Naive thymus-derived CD4-positive, alpha-beta T cell (primary cell): ENCODE measurements at regions of chr20 and their contacts with region 1.

Region 1: GRCh38 chr20:36591854-36592641 is 13.5 kb upstream of the RAB5IF start:
- DNase-seq: peak in 6 of 9 donors; percentile 23 to 61 (median 42)
- ATAC-seq: peak; percentile 40
- H3K4me3 ChIP-seq: no peak overlapping the region
- H3K4me3 Mint-ChIP-seq: peak overlapping the region in 7 of 10 donors; percentile 22 to 60 (median 42)
- H3K27ac ChIP-seq: peak overlapping the region; percentile 56
- H3K27ac Mint-ChIP-seq: peak overlapping the region; percentile 42 to 90 (median 88)
- H3K4me1 ChIP-seq: peaks cover 14 to 16% of the 10 kb centered on the region in 2 donors
- H3K4me1 Mint-ChIP-seq: peaks cover 33 to 61% (median 48%) of the 10 kb centered on the region in 7 donors
- H3K27me3 ChIP-seq: no peaks in the 10 kb centered on the region
- H3K27me3 Mint-ChIP-seq: no peaks in the 10 kb centered on the region

Region 2: DNA sequence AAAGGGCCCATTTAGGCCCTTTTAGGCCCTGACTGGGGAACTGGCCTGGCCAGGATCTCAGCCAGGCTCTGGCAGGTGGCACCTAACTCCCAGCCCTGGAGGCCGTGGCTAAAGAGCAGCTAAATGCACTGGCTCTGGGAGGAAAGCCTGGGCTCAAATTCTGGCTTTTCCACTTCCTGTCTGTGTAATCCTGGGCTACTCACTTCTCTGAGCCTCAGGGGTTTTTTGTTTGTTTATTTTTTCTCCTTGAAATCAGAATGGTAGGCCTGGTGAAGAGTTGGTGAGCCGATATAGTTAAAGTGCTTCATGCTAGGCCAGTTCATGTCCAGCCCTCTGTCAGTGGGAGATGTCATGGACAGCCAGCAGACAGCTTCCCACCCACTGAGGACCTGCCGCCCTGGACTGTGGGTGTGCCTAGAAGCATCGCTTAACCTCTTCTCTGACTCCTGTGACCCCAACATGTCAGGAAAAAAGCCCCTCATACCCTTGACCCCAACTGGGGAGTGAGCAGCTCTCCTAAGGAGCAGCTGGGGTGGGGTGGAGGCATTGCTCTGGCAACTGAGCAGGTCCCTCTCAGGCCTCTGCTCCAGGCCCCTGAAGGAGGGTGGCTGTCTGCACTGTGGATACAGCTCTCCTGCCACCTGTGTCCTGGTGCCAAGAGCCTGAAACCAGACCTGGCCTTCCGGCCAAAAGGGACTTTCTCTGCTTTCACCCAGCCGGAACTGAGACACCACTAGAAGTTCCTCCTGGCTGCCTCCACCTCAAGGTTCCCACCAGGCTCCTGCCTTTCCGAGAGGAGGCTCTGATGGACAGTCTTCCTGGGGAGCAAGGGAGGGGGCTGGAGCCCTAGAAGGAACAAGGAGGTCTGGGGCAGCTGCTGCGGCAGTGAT is 107.9 kb before region 1 on chr20:
- CTCF ChIA-PET with region 1: no interaction called
- POLR2A ChIA-PET with region 1: no interaction called
- intact Hi-C with region 1: no loop called
- DNase-seq: no peak
- ATAC-seq: no peak
- H3K4me3 ChIP-seq: no peak overlapping the region
- H3K4me3 Mint-ChIP-seq: no peak overlapping the region
- H3K27ac ChIP-seq: no peak overlapping the region
- H3K27ac Mint-ChIP-seq: no peak overlapping the region
- H3K4me1 ChIP-seq: peaks cover 4% of the 10 kb centered on the region in 2 donors
- H3K4me1 Mint-ChIP-seq: peaks cover 20 to 55% (median 34%) of the 10 kb centered on the region in 7 donors
- H3K27me3 ChIP-seq: no peaks in the 10 kb centered on the region
- H3K27me3 Mint-ChIP-seq: no peaks in the 10 kb centered on the region

Region 3: GRCh38 chr20:36506253-36506652 is 85.8 kb before region 1 on chr20:
- CTCF ChIA-PET with region 1: no interaction called
- POLR2A ChIA-PET with region 1: no interaction called
- intact Hi-C with region 1: loop called in 1 of 2 experiments (anchors 5 kb)
- DNase-seq: peak in 7 of 9 donors; percentile 18 to 49 (median 42)
- ATAC-seq: peak; percentile 77
- H3K4me3 ChIP-seq: no peak overlapping the region
- H3K4me3 Mint-ChIP-seq: no peak overlapping the region
- H3K27ac ChIP-seq: no peak overlapping the region
- H3K27ac Mint-ChIP-seq: peak overlapping the region in 5 of 9 donors; percentile 17 to 72 (median 27)
- H3K4me1 ChIP-seq: no peaks in the 10 kb centered on the region
- H3K4me1 Mint-ChIP-seq: peaks cover 0 to 19% (median 14%) of the 10 kb centered on the region in 7 donors
- H3K27me3 ChIP-seq: no peaks in the 10 kb centered on the region
- H3K27me3 Mint-ChIP-seq: no peaks in the 10 kb centered on the region

Region 4: DNA sequence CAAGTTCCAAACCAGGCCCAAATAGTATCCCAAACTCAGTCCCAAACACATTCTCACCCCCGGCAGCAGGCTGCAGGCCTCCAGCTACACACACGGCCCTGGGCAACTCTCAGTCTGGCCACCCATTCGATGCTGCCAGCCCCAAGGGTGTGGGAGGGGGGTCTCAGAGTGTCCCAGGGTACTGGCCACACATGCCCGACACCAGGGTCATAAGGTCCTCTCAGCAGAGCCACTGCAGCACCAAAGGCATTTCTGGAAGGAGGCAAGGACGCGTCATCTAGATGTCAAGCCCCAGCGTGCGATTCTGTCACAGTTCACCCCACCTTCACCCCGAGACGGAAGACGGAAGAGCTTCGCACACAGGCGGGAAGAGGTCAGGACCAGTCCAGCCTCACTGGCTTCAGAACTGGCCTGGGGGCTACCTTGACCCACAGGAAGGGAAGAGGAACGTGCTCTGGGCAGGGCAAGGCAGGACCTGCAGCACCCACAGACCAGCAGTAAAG is 41.2 kb before region 1 on chr20:
- CTCF ChIA-PET with region 1: no interaction called
- POLR2A ChIA-PET with region 1: no interaction called
- intact Hi-C with region 1: loop called in 1 of 2 experiments (anchors 1 kb)
- DNase-seq: no peak
- ATAC-seq: no peak
- H3K4me3 ChIP-seq: no peak overlapping the region
- H3K4me3 Mint-ChIP-seq: no peak overlapping the region
- H3K27ac ChIP-seq: no peak overlapping the region
- H3K27ac Mint-ChIP-seq: peak overlapping the region in 1 of 9 donors; percentile 60
- H3K4me1 ChIP-seq: no peaks in the 10 kb centered on the region
- H3K4me1 Mint-ChIP-seq: peaks cover 0 to 5% (median 2%) of the 10 kb centered on the region in 7 donors
- H3K27me3 ChIP-seq: no peaks in the 10 kb centered on the region
- H3K27me3 Mint-ChIP-seq: no peaks in the 10 kb centered on the region

Region 5: DNA sequence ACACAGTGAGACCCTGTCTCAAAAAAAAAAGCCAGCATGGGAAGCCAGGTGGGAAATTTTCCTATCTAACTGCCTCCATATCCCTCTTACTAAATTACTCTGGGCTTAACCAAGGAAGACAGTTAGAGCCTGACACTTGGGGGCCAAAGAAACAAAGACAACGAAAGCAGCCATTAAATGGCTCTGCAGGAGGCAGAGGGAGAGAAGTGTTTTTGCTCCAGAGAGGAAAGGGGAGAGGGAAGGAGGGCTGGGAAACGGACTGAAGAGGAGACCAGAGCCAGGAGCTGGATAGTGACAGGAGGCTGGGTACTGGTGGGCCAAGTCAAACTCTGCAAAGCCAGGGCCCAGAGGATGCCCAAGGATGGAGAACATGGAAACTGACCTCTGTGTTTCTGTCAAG is 29.3 kb before region 1 on chr20:
- CTCF ChIA-PET with region 1: interaction called, 16 read pairs
- POLR2A ChIA-PET with region 1: no interaction called
- intact Hi-C with region 1: no loop called
- DNase-seq: no peak
- ATAC-seq: no peak
- H3K4me3 ChIP-seq: no peak overlapping the region
- H3K4me3 Mint-ChIP-seq: no peak overlapping the region
- H3K27ac ChIP-seq: no peak overlapping the region
- H3K27ac Mint-ChIP-seq: peak overlapping the region in 1 of 9 donors; percentile 21
- H3K4me1 ChIP-seq: peaks cover 0 to 10% of the 10 kb centered on the region in 2 donors
- H3K4me1 Mint-ChIP-seq: peaks cover 0 to 5% (median 0%) of the 10 kb centered on the region in 7 donors
- H3K27me3 ChIP-seq: no peaks in the 10 kb centered on the region
- H3K27me3 Mint-ChIP-seq: no peaks in the 10 kb centered on the region

Region 6: DNA sequence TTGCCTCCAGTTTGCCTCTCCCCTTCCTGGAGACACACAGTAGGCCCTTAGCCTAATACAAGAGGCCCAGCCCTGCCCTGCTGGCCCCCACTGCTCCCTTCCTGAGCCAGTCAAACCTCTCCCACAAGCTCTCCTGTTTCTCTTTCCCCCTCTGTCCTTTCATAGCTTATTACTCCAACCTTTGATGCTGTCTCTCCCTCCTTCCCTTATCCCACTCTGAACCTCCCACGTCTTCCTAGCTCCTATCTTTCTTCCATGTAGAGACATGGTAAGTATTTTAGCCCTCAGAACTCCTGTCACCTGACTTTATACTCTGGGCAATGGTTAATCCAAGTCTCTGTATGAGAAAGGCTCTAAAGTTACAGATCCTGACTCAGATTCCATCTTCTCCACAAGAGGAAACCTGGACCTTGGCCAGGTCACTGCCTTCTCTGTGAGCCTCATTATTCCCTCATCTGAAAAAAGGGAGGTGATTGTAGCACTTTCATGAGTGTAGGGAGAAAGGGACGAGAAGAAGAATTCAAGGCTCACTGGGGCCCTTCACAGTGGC is 12.0 kb before region 1 on chr20:
- CTCF ChIA-PET with region 1: interaction called, 10 read pairs
- POLR2A ChIA-PET with region 1: interaction called, 123 read pairs
- intact Hi-C with region 1: no loop called
- DNase-seq: no peak
- ATAC-seq: no peak
- H3K4me3 ChIP-seq: no peak overlapping the region
- H3K4me3 Mint-ChIP-seq: peak overlapping the region in 2 of 10 donors; percentile 23 to 42
- H3K27ac ChIP-seq: no peak overlapping the region
- H3K27ac Mint-ChIP-seq: peak overlapping the region in 8 of 9 donors; percentile 20 to 86 (median 72)
- H3K4me1 ChIP-seq: peaks cover 5 to 24% of the 10 kb centered on the region in 2 donors
- H3K4me1 Mint-ChIP-seq: peaks cover 19 to 44% (median 33%) of the 10 kb centered on the region in 7 donors
- H3K27me3 ChIP-seq: no peaks in the 10 kb centered on the region
- H3K27me3 Mint-ChIP-seq: no peaks in the 10 kb centered on the region

Region 7: GRCh38 chr20:38369389-38369788 is 1777.3 kb after region 1 on chr20:
- CTCF ChIA-PET with region 1: no interaction called
- POLR2A ChIA-PET with region 1: no interaction called
- intact Hi-C with region 1: no loop called
- DNase-seq: no peak
- ATAC-seq: peak; percentile 53
- H3K4me3 ChIP-seq: no peak overlapping the region
- H3K4me3 Mint-ChIP-seq: no peak overlapping the region
- H3K27ac ChIP-seq: no peak overlapping the region
- H3K27ac Mint-ChIP-seq: no peak overlapping the region
- H3K4me1 ChIP-seq: no peaks in the 10 kb centered on the region
- H3K4me1 Mint-ChIP-seq: peaks cover 0 to 9% (median 3%) of the 10 kb centered on the region in 7 donors
- H3K27me3 ChIP-seq: no peaks in the 10 kb centered on the region
- H3K27me3 Mint-ChIP-seq: peaks cover 0 to 9% (median 0%) of the 10 kb centered on the region in 5 donors